ENCODE measurements at regions of chr12 and their contacts with region 1.

Region 1: DNA sequence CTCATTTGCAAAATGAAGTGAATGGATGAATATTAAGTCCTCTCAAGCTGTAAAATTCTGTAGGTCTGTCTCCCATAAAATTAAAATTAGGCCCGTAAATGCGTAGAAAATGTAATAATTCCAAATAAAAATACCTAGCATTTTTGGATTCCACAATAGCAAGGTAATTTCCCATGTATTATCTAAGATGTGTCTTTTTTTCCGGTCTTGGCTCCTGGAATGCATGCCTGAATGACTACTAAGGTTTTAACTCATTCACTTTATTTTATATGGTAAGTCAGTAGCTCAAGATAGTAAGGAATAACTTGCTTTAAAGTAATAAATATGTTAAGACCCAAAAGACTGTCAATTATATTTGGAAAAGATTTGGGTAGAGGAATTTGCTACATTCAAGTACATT is 11.1 kb downstream of the TXNRD1 start:
- DNase-seq: peak; percentile 31
- H3K4me3 ChIP-seq: no peak overlapping the region
- H3K27ac ChIP-seq: peak overlapping the region; percentile 26
- H3K4me1 ChIP-seq: peaks cover 10% of the 10 kb centered on the region
- H3K27me3 ChIP-seq: no peaks in the 10 kb centered on the region
- CTCF ChIP-seq: no peak

Region 2: GRCh38 chr12:104263580-104264358 is 37.1 kb after region 1 on chr12:
- CTCF ChIA-PET with region 1: no interaction called
- dilution Hi-C with region 1: no loop called
- in situ Hi-C with region 1: no loop called
- intact Hi-C with region 1: loop called (anchors 5 kb)
- DNase-seq: peak; percentile 92
- H3K4me3 ChIP-seq: peak overlapping the region in 1 of 3 experiments; percentile 3
- H3K27ac ChIP-seq: peak overlapping the region; percentile 87
- H3K4me1 ChIP-seq: peaks cover 20% of the 10 kb centered on the region
- H3K27me3 ChIP-seq: no peaks in the 10 kb centered on the region
- CTCF ChIP-seq: no peak

Measured in mammary epithelial cell (primary cell).